Dorsolateral prefrontal cortex (tissue), 120 donors: ENCODE measurements at regions of chr11 and their contacts with region 1.

Region 1: GRCh38 chr11:76444384-76445123 is at the start of gene EMSY:
- DNase-seq: peak; percentile 96 to 99 (median 99)
- H3K4me3 ChIP-seq: peak within 1 kb of the TSS; percentile 62 to 100 (median 98)
- H3K27ac ChIP-seq: peak within 1 kb of the TSS; percentile 28 to 98 (median 94)
- H3K27me3 ChIP-seq: no peaks in the 10 kb centered on the region
- CTCF ChIP-seq: peak in 46 of 56 donors; percentile 8 to 69 (median 39)
- total RNA-seq, gene EMSY: 26.3 to 56.1 (median 37.3) TPM

Region 2: GRCh38 chr11:75031771-75032549 is 1412.6 kb before region 1 on chr11:
- intact Hi-C with region 1: loop called in 1 of 2 experiments (anchors 10 kb)
- DNase-seq: peak in 9 of 10 donors; percentile 58 to 81 (median 71)
- H3K4me3 ChIP-seq: no peak overlapping the region
- H3K27ac ChIP-seq: peak overlapping the region in 4 of 59 donors; percentile 17 to 56 (median 42)
- H3K27me3 ChIP-seq: no peaks in the 10 kb centered on the region
- CTCF ChIP-seq: peak; percentile 34 to 85 (median 70)

Region 3: GRCh38 chr11:76380967-76381719 is 63.4 kb before region 1 on chr11 and contains the starts of genes GVQW3 and THAP12:
- intact Hi-C with region 1: loop called (anchors 1 kb)
- DNase-seq: peak; percentile 88 to 97 (median 94)
- H3K4me3 ChIP-seq: peak within 1 kb of the TSS; percentile 63 to 99 (median 90)
- H3K27ac ChIP-seq: peak within 1 kb of the TSS in 53 of 59 donors; percentile 12 to 90 (median 77)
- H3K27me3 ChIP-seq: no peaks in the 10 kb centered on the region
- CTCF ChIP-seq: peak in 44 of 56 donors; percentile 6 to 63 (median 30)
- total RNA-seq, gene GVQW3: 10.9 to 28.8 (median 18.6) TPM
- total RNA-seq, gene THAP12: 19.0 to 37.6 (median 26.2) TPM